Heart left ventricle (tissue), 16 donors: ENCODE measurements at regions of chr15 and their contacts with region 1.

Region 1: GRCh38 chr15:82875411-82876003 is 66.1 kb downstream of the WHAMM start:
- DNase-seq: no peak
- ATAC-seq: no peak
- H3K4me3 ChIP-seq: no peak overlapping the region
- H3K27ac ChIP-seq: no peak overlapping the region
- H3K4me1 ChIP-seq: peaks cover 0 to 26% (median 6%) of the 10 kb centered on the region in 12 donors
- H3K27me3 ChIP-seq: no peaks in the 10 kb centered on the region
- CTCF ChIP-seq: no peak
- POLR2A ChIP-seq: no peak

Region 2: DNA sequence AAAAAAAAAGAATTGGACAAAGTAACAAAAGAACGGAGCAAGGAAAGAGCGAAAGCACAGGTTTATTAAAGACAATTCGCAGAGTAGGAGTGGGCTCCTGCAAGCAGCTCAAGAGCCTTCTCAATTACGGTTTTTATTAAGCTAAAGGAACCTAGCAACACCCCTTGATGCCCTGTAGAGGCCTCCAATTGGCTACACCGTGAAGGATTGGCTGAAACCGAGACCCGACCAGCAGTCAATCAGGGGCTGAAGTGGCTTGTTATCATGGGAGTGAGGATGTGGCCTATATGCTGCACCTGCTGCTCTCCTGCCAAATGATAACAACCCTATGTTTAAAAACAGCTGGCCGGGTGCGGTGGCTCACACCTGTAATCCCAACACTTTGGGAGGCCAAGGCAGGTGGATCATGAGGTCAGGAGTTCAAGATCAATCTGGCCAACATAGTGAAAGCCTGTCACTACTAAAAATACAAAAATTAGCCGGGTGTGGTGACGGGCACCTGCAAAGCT is 145.4 kb before region 1 on chr15:
- intact Hi-C with region 1: no loop called
- DNase-seq: no peak
- ATAC-seq: no peak
- H3K4me3 ChIP-seq: no peak overlapping the region
- H3K27ac ChIP-seq: no peak overlapping the region
- H3K4me1 ChIP-seq: no peaks in the 10 kb centered on the region
- H3K27me3 ChIP-seq: no peaks in the 10 kb centered on the region
- CTCF ChIP-seq: no peak
- POLR2A ChIP-seq: no peak

Region 3: GRCh38 chr15:82809404-82810060 is 66.0 kb before region 1 on chr15 and contains the start of gene WHAMM:
- intact Hi-C with region 1: loop called in 1 of 10 experiments (anchors 10 kb)
- DNase-seq: peak; percentile 98 to 99 (median 99)
- ATAC-seq: peak; percentile 93 to 97 (median 95)
- H3K4me3 ChIP-seq: peak within 1 kb of the TSS; percentile 71 to 99 (median 89)
- H3K27ac ChIP-seq: peak within 1 kb of the TSS; percentile 96 to 100 (median 99)
- H3K4me1 ChIP-seq: peaks cover 0 to 51% (median 33%) of the 10 kb centered on the region in 12 donors
- H3K27me3 ChIP-seq: no peaks in the 10 kb centered on the region
- CTCF ChIP-seq: peak in 3 of 12 donors; percentile 8 to 35 (median 23)
- POLR2A ChIP-seq: peak; percentile 90 to 96
- total RNA-seq, gene WHAMM: 4.6 to 9.1 (median 6.3) TPM

Region 4: GRCh38 chr15:82847703-82848102 is 27.8 kb before region 1 on chr15:
- intact Hi-C with region 1: no loop called
- DNase-seq: no peak
- ATAC-seq: no peak
- H3K4me3 ChIP-seq: no peak overlapping the region
- H3K27ac ChIP-seq: no peak overlapping the region
- H3K4me1 ChIP-seq: peaks cover 0 to 16% (median 11%) of the 10 kb centered on the region in 12 donors
- H3K27me3 ChIP-seq: no peaks in the 10 kb centered on the region
- CTCF ChIP-seq: no peak
- POLR2A ChIP-seq: no peak

Region 5: DNA sequence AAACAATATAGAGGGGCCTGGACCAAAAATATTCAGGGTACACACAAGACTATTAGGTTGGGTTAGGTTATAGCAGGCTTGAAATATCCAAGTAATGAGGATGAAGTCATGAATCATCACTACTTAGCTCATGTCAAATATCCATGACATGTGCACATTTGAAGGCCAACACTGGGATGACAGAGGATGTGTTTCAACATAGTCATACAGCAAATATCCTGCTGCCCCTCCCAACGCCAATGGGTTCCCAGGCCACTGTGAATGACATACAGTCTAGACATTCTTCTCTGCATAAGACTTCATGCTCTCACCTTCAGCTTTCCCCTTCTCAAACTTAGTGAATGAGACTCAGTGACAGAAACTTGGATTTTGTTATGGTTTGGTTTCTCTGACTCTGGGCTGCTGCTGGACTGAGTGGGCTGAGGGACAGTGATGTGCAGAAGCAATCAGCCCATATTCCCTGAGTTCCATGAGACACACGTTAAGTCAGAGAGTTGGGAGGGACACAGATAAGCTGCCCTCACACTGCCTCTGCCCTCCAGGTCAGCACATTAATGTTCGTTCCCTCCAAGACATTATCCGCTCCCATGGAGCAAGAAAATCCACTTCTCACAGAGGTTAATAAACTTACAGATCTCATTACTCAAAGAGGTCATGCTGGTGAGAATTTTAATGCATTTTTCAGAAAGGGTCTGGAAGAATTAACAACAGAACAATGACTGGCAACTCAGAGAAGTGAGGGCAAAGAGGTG is 61.6 kb after region 1 on chr15:
- intact Hi-C with region 1: loop called in 1 of 10 experiments (anchors 10 kb)
- DNase-seq: no peak
- ATAC-seq: no peak
- H3K4me3 ChIP-seq: no peak overlapping the region
- H3K27ac ChIP-seq: no peak overlapping the region
- H3K4me1 ChIP-seq: peaks cover 0 to 4% (median 0%) of the 10 kb centered on the region in 12 donors
- H3K27me3 ChIP-seq: no peaks in the 10 kb centered on the region
- CTCF ChIP-seq: no peak
- POLR2A ChIP-seq: no peak